K562 (cell line): ENCODE measurements at regions of chr12 and their contacts with region 1.

Region 1: GRCh38 chr12:114476159-114476558 is 70.2 kb upstream of the TBX5 start:
- DNase-seq: peak in 2 of 4 experiments; percentile 16 to 19
- ATAC-seq: no peak
- H3K4me3 ChIP-seq: no peak overlapping the region
- H3K27ac ChIP-seq: no peak overlapping the region
- H3K4me1 ChIP-seq: no peaks in the 10 kb centered on the region
- H3K27me3 ChIP-seq: peaks cover 14 to 22% of the 10 kb centered on the region in 2 experiments; a peak in 4 of 5 replicates
- CTCF ChIP-seq: peak in 2 of 3 experiments; percentile 61 to 63; a peak in 4 of 6 replicates
- EP300 ChIP-seq: no peak
- POLR2A ChIP-seq: no peak
- RAD21 ChIP-seq: peak; percentile 11 to 54; a peak in 2 of 4 replicates

Region 2: DNA sequence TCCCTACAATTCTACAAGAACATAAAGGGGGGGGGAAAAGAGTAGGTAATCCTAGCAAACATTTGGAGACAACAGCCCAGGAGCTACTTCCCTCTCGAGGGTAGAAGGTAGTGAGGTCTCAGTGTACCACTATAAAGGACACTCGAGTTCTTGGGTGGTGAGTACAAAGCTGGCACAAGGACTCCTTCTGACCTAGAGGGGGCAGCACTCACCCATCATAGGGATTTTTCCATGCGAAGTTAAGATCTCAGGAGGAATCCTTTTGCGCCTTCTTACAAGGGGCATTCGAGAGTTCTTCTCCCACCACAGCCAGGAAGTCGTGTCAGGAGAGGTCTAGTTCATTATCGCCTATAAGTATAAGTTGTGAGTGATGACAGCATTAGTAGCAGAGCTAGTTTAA is 309.8 kb before region 1 on chr12:
- CTCF ChIA-PET with region 1: interaction called, 4 read pairs
- POLR2A ChIA-PET with region 1: no interaction called
- in situ Hi-C with region 1: no loop called
- intact Hi-C with region 1: loop called (anchors 10 kb)
- DNase-seq: peak; percentile 43 to 58 (median 52)
- ATAC-seq: peak; percentile 68
- H3K4me3 ChIP-seq: no peak overlapping the region
- H3K27ac ChIP-seq: no peak overlapping the region
- H3K4me1 ChIP-seq: no peaks in the 10 kb centered on the region
- H3K27me3 ChIP-seq: no peaks in the 10 kb centered on the region; a peak in 2 of 5 replicates
- CTCF ChIP-seq: peak; percentile 53 to 64 (median 57)
- EP300 ChIP-seq: no peak
- POLR2A ChIP-seq: no peak
- RAD21 ChIP-seq: peak; percentile 38 to 70